ENCODE measurements at regions of chr20 and their contacts with region 1.

Region 1: DNA sequence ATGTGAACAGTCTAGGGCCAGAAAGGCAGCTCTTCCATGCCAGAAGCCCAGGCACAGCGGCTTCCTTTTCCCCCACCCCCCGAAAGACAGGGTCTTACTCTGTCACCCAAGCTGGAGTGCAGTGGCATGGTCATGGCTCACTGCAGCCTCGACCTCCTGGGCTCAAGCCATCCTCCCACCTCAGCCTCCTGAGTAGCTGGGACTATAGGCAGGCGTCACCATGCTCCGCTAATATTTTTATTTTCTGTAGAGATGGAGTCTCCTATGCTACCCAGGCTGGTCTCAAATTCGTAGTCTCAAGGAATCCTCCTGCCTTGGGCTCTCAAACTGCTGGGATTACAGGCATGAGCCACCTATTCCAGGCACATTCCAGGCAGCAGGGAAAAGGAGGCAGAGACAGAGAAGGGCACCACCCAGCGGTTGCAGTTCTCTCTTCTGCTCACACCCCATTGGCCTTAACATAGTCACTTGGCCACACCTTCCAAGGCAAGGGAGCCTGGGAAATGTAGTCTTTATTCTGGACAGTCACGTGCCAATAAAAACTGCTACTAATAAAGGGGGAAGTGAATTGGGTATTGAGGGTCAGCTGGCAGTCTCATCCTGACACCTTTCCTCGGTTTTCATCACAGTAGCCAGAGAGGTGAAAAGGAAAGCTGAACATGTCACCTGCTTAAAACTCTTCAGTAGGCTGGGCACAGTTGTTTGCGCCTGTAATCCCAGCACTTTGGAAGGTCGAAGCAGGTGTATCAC is 205.9 kb downstream of the ZMYND8 start:
- DNase-seq: no peak
- H3K4me3 Mint-ChIP-seq: no peak overlapping the region
- H3K27ac Mint-ChIP-seq: no peak overlapping the region
- H3K4me1 Mint-ChIP-seq: no peaks in the 10 kb centered on the region
- H3K27me3 Mint-ChIP-seq: peaks cover 9% of the 10 kb centered on the region

Region 2: DNA sequence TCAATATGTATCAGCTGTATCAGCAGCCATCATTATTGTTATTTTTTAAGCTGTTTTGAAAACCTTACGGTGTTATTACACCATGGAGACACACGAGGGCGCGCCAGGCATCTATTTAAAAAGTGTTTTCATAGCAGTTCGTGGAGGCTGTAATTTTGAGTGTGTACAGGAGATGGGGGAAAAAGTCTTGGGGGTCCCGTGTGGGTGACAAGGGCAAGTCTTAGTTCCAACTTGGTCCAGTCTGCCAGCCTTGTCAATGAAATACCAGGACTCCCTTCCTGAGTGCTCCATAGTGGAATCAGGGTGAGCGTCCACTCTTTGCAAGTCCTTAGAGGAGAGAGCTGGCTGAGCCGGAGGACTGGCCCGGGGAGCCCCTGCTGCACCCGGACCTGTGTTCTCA is 397.9 kb before region 1 on chr20:
- intact Hi-C with region 1: loop called (anchors 1 kb)
- DNase-seq: peak; percentile 24
- H3K4me3 Mint-ChIP-seq: no peak overlapping the region
- H3K27ac Mint-ChIP-seq: no peak overlapping the region
- H3K4me1 Mint-ChIP-seq: peaks cover 6% of the 10 kb centered on the region
- H3K27me3 Mint-ChIP-seq: peaks cover 6% of the 10 kb centered on the region

Region 3: DNA sequence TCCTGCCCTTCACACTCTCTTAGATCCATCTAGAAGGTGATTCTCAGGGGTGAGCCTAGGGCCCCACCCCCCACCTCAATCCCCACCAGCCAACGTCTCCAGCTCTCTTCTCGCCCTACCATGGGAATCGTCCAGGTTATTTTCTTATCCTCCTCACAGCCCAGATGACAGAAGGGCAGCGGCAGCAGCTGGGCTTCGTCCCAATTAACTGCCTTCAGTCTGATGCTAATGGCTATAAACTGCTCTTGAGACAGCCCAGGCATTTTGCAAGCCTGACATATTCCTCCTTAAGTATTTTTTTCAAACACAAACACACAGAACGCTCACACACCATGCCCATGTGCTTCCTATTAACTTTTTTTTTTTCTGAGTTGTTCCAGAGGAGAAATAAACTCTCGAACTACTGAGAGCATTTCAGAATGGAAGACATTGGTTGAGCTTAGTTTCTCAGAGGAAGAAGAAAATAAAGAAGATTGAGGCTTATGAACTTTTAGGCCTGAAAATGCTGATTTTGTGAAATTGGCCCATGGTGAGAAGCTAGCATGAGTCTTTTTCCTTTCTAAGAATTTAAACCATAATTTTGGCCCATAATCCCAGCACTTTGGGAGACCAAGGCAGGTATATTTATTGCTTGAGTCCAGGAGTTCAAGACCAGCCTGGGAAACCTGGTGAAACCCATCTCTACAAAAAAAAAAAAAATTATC is 131.3 kb before region 1 on chr20:
- intact Hi-C with region 1: no loop called
- DNase-seq: no peak
- H3K4me3 Mint-ChIP-seq: no peak overlapping the region
- H3K27ac Mint-ChIP-seq: no peak overlapping the region
- H3K4me1 Mint-ChIP-seq: no peaks in the 10 kb centered on the region
- H3K27me3 Mint-ChIP-seq: peaks cover 32% of the 10 kb centered on the region

Region 4: DNA sequence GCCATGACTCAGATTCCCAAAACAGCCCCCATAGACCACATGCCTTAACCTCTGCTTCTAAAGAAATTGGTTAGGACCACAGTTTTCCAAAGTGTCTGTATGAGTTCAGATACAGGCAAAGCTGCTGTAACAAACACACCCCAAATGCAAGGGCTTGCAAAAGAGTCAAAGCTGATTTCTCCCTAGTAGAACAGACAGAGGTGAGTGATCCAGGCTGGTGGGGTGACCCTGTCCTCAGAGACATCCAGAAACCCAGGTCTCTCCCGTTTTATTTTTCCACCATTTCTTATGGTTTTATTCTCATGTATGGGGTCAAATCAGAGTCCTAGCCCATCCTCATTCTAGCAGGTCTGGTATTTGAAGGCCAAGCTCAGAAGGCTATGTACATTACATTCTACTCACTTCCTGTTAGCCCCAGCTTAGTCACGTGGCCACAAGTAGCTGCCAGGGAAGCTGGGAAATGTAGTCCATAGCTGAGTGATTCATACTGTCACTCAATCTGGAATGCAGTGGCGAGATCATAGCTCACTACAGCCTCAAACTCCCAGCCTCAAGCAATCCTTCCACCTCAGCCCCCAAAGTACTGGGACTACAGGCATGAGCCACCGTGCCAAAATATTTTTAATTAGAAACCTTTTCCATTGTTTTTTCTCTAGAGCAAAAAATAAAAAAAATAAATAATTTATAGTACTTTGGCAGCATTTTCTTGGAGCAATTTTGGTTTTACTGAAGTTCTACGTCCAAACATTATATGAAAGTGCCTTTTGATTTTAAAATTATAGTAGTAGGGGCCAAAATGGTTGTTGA is 30.7 kb after region 1 on chr20:
- intact Hi-C with region 1: no loop called
- DNase-seq: no peak
- H3K4me3 Mint-ChIP-seq: no peak overlapping the region
- H3K27ac Mint-ChIP-seq: no peak overlapping the region
- H3K4me1 Mint-ChIP-seq: peaks cover 4% of the 10 kb centered on the region
- H3K27me3 Mint-ChIP-seq: no peaks in the 10 kb centered on the region

Measured in activated T-helper 1 cell treated with anti-CD3 and anti-CD28 coated beads, Interleukin-12 subunit alpha, Interleukin-12 subunit beta, Interleukin-2, Interleukin-4 antibody, amounts not matched to agents 30 ng/mL and 10 ng/mL and 1 ng/mL, durations not matched to agents 14 hours and 24 hours and 36 hours (primary cell).